ENCODE measurements at regions of chr15 and their contacts with region 1.

Region 1: DNA sequence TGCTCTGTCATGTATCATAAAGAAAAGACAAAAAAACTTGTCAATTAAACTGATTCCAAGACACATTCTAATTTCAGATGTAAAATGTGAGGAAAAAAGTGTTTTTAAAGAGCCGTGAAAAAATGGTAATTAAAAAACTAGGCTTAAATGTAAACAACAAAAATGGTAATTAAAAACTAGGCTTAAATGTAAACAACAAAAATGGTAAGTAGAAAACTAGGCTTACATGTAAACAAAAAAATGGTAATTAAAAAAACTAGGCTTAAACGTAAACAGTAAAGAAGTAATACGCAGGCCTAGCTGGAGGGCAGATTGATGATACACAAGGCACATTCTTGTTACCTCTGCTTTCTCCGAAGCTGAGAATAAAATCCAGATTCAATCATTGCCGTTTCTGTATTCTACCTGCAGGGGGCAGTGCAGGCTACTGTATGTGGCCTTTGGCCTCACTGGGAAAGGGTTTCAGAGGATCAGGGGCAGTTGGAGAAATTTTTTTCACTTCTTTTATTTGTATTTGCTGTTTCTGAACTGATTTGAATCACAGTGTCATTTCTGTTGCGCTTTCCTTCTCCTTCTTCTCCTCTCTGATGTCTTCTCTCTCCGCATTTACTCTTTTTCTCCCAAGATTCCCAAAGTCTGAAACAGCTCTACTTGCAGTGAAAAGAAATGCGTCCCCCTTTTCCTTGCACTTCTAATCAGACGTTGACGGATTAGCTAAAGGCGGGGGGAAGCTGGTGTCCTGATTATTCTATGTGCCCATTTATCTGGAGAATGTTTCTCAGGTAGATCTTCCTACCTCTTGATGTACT is 67.2 kb upstream of the MCTP2 start:
- DNase-seq: peak; percentile 48
- ATAC-seq: peak; percentile 75
- H3K4me3 ChIP-seq: no peak overlapping the region
- H3K27ac ChIP-seq: no peak overlapping the region
- H3K4me1 ChIP-seq: no peaks in the 10 kb centered on the region
- H3K27me3 ChIP-seq: no peaks in the 10 kb centered on the region
- CTCF ChIP-seq: peak; percentile 79 to 92 (median 79)
- POLR2A ChIP-seq: no peak
- RAD21 ChIP-seq: peak; percentile 87

Region 2: GRCh38 chr15:94324117-94324826 is 160.1 kb after region 1 on chr15:
- CTCF ChIA-PET with region 1: interaction called, 60 read pairs
- POLR2A ChIA-PET with region 1: no interaction called
- RAD21 ChIA-PET with region 1: interaction called in 1 of 2 experiments, 12 read pairs
- intact Hi-C with region 1: loop called (anchors 1 kb)
- DNase-seq: peak; percentile 15
- ATAC-seq: peak; percentile 93
- H3K4me3 ChIP-seq: no peak overlapping the region
- H3K27ac ChIP-seq: no peak overlapping the region
- H3K4me1 ChIP-seq: no peaks in the 10 kb centered on the region; a peak in 1 of 4 replicates
- H3K27me3 ChIP-seq: no peaks in the 10 kb centered on the region
- CTCF ChIP-seq: peak; percentile 80 to 95 (median 85)
- POLR2A ChIP-seq: no peak
- RAD21 ChIP-seq: peak; percentile 87

Region 3: DNA sequence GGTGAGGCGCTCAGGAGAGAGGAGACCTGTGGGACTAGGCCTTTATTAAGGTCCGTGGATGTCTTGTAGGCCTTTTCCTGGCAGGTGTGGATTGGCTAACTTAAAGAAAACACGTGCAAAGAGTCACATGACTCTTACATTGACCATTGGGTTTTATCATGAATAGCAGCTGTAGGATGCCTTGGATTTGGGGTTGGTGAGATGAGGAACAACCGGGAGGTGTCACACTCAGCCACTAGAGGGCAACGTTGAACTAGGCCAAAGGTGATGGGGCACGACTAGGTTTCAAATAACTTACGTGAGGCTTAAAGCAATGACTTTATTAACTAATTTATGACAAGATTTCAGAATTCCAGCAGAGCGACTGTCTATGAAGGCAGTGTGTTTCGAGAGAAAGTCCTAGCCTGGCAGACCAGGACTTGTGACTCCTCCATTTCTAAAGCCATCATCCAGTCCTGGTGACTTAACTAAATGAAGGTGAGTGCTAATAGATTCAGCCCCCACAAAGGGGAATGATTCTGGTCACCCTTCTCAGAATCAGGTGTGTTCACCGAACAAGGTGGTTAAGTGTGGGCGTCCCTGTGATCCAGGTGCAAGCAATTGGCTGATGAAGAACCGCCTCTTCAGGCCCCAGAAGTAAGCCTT is 412.8 kb after region 1 on chr15:
- CTCF ChIA-PET with region 1: no interaction called
- POLR2A ChIA-PET with region 1: no interaction called
- RAD21 ChIA-PET with region 1: no interaction called
- intact Hi-C with region 1: loop called (anchors 10 kb)
- DNase-seq: peak; percentile 26
- ATAC-seq: peak; percentile 89
- H3K4me3 ChIP-seq: no peak overlapping the region
- H3K27ac ChIP-seq: no peak overlapping the region
- H3K4me1 ChIP-seq: no peaks in the 10 kb centered on the region
- H3K27me3 ChIP-seq: no peaks in the 10 kb centered on the region
- CTCF ChIP-seq: peak; percentile 30 to 88 (median 81); a peak in 4 of 6 replicates
- POLR2A ChIP-seq: no peak
- RAD21 ChIP-seq: peak; percentile 53